GM12878 (cell line): ENCODE measurements at regions of chrX and their contacts with region 1.

Region 1: GRCh38 chrX:71622576-71623450 is 4.5 kb upstream of the CXCR3 start:
- DNase-seq: peak; percentile 68
- ATAC-seq: peak; percentile 70
- H3K4me3 ChIP-seq: no peak overlapping the region
- H3K27ac ChIP-seq: peak overlapping the region; percentile 89
- H3K4me1 ChIP-seq: peaks cover 56% of the 10 kb centered on the region
- H3K27me3 ChIP-seq: no peaks in the 10 kb centered on the region
- CTCF ChIP-seq: 0 out of 6 replicates have a peak, but pooled peaks of 1 of the 3 experiments have one; percentile 9
- EP300 ChIP-seq: peak; percentile 98
- POLR2A ChIP-seq: no peak; the same call in 1 of the 2 replicates
- RAD21 ChIP-seq: no peak

Region 2: GRCh38 chrX:71532753-71533425 is 89.9 kb before region 1 on chrX and contains the start of gene OGT:
- CTCF ChIA-PET with region 1: interaction called, 5 read pairs
- POLR2A ChIA-PET with region 1: interaction called, 9 read pairs
- RAD21 ChIA-PET with region 1: interaction called, 20 read pairs
- SMC1A ChIA-PET with region 1: interaction called, 8 read pairs
- in situ Hi-C with region 1: no loop called
- intact Hi-C with region 1: no loop called
- DNase-seq: peak; percentile 79
- ATAC-seq: peak; percentile 86
- H3K4me3 ChIP-seq: peak within 1 kb of the TSS; percentile 71
- H3K27ac ChIP-seq: peak within 1 kb of the TSS; percentile 83
- H3K4me1 ChIP-seq: 0 out of 2 replicates have a peak, but pooled peaks cover 3% of the 10 kb centered on the region
- H3K27me3 ChIP-seq: no peaks in the 10 kb centered on the region
- CTCF ChIP-seq: no peak
- EP300 ChIP-seq: peak in 1 of 2 experiments; percentile 49; a peak in 1 of 4 replicates
- POLR2A ChIP-seq: peak; percentile 82
- RAD21 ChIP-seq: no peak
- polyA plus RNA-seq, gene OGT: 38.2 to 43.8 TPM

Region 3: GRCh38 chrX:71541210-71542022 is 81.4 kb before region 1 on chrX:
- CTCF ChIA-PET with region 1: interaction called, 4 read pairs
- POLR2A ChIA-PET with region 1: interaction called, 3 read pairs
- RAD21 ChIA-PET with region 1: interaction called, 3 read pairs
- SMC1A ChIA-PET with region 1: interaction called, 8 read pairs
- in situ Hi-C with region 1: no loop called
- intact Hi-C with region 1: loop called (anchors 5 kb)
- DNase-seq: no peak
- ATAC-seq: peak; percentile 83
- H3K4me3 ChIP-seq: peak overlapping the region; percentile 17; the same call in 1 of the 2 replicates
- H3K27ac ChIP-seq: peak overlapping the region; percentile 51
- H3K4me1 ChIP-seq: peaks cover 5% of the 10 kb centered on the region; the same call in 1 of the 2 replicates
- H3K27me3 ChIP-seq: no peaks in the 10 kb centered on the region
- CTCF ChIP-seq: no peak
- EP300 ChIP-seq: 0 out of 4 replicates have a peak, but pooled peaks of 1 of the 2 experiments have one; percentile 27
- POLR2A ChIP-seq: no peak
- RAD21 ChIP-seq: 0 out of 2 replicates have a peak, but pooled peaks have one; percentile 6

Region 4: DNA sequence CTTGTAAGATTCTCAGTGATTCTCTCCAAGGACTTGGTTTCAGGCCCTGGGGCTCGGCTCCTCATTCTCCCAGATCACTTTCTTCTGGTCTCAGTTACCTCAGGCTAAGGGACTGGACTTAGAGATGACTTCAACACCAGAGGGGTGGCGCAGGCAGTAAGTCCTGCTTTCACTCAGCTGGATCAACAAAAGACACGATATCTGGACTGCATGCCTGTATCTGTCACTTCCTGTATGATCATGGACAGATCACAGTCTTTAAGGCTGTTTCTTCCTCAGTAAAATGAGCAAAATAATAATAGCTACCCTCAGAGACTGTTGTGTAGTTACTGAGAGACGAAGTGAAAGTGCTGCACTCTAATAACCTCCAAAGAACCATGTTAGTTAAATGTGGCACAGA is 15.0 kb after region 1 on chrX:
- CTCF ChIA-PET with region 1: interaction called, 16 read pairs
- POLR2A ChIA-PET with region 1: interaction called, 17 read pairs
- RAD21 ChIA-PET with region 1: interaction called, 44 read pairs
- SMC1A ChIA-PET with region 1: interaction called, 119 read pairs
- in situ Hi-C with region 1: no loop called
- intact Hi-C with region 1: loop called (anchors 1 kb)
- DNase-seq: no peak
- ATAC-seq: peak; percentile 65
- H3K4me3 ChIP-seq: 0 out of 2 replicates have a peak overlapping the region, but pooled peaks have one; percentile 10
- H3K27ac ChIP-seq: peak overlapping the region; percentile 83
- H3K4me1 ChIP-seq: peaks cover 21% of the 10 kb centered on the region
- H3K27me3 ChIP-seq: no peaks in the 10 kb centered on the region
- CTCF ChIP-seq: no peak
- EP300 ChIP-seq: 0 out of 4 replicates have a peak, but pooled peaks of 1 of the 2 experiments have one; percentile 11
- POLR2A ChIP-seq: no peak
- RAD21 ChIP-seq: no peak